ENCODE measurements at regions of chr16 and their contacts with region 1.

Region 1: DNA sequence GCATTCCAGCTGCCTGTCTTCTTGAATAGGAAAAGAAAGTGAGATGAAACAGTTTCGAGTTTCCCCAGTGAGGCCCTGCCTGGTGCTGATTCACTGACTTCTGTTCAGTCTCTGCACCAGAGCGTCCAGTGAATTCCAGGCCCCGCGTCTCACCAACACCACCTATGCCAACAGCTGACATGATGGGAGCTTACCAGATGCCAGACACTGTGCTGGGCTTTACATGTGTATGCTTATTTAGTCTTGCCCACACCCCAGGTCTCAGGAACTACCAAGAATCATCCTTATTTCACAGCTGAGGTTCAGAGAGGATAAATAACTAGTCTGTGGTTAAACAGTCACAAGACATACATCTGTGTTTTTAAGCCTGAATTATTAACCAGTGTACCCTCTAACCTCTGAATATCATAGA is 29.1 kb upstream of the IRX6 start:
- DNase-seq: no peak
- ATAC-seq: no peak
- H3K4me3 ChIP-seq: no peak overlapping the region
- H3K27ac ChIP-seq: no peak overlapping the region
- H3K4me1 ChIP-seq: peaks cover 0 to 13% of the 10 kb centered on the region in 2 experiments; a peak in 1 of 4 replicates
- H3K27me3 ChIP-seq: peaks cover 12% of the 10 kb centered on the region; the same call in 1 of the 2 replicates
- CTCF ChIP-seq: no peak
- POLR2A ChIP-seq: no peak
- RAD21 ChIP-seq: no peak

Region 2: GRCh38 chr16:55189682-55190636 is 105.0 kb before region 1 on chr16:
- CTCF ChIA-PET with region 1: no interaction called
- POLR2A ChIA-PET with region 1: no interaction called
- RAD21 ChIA-PET with region 1: no interaction called
- intact Hi-C with region 1: no loop called
- DNase-seq: no peak
- ATAC-seq: no peak
- H3K4me3 ChIP-seq: no peak overlapping the region
- H3K27ac ChIP-seq: no peak overlapping the region
- H3K4me1 ChIP-seq: no peaks in the 10 kb centered on the region
- H3K27me3 ChIP-seq: peaks cover 27% of the 10 kb centered on the region; the same call in 1 of the 2 replicates
- CTCF ChIP-seq: no peak
- POLR2A ChIP-seq: no peak
- RAD21 ChIP-seq: no peak

Region 3: GRCh38 chr16:55508941-55509931 is 214.3 kb after region 1 on chr16 and contains the start of gene LPCAT2:
- CTCF ChIA-PET with region 1: no interaction called
- POLR2A ChIA-PET with region 1: no interaction called
- RAD21 ChIA-PET with region 1: no interaction called
- intact Hi-C with region 1: loop called (anchors 10 kb)
- DNase-seq: peak; percentile 71
- ATAC-seq: peak; percentile 99
- H3K4me3 ChIP-seq: peak within 1 kb of the TSS; percentile 64 to 84
- H3K27ac ChIP-seq: peak within 1 kb of the TSS; percentile 50; the same call in 1 of the 2 replicates
- H3K4me1 ChIP-seq: peaks cover 3 to 15% of the 10 kb centered on the region in 2 experiments; a peak in 3 of 4 replicates
- H3K27me3 ChIP-seq: no peaks in the 10 kb centered on the region
- CTCF ChIP-seq: no peak
- POLR2A ChIP-seq: peak; percentile 73
- RAD21 ChIP-seq: no peak
- total RNA-seq, gene LPCAT2: 13.1 TPM